Motor neuron (in vitro differentiated cells): ENCODE measurements at regions of chr10 and their contacts with region 1.

Region 1: GRCh38 chr10:115417585-115418265 is 324.6 kb downstream of the ATRNL1 start:
- ATAC-seq: peak in 3 of 8 experiments; percentile 91 to 100 (median 97)
- H3K4me3 ChIP-seq: no peak overlapping the region
- H3K27ac ChIP-seq: no peak overlapping the region
- H3K4me1 ChIP-seq: no peaks in the 10 kb centered on the region

Region 2: GRCh38 chr10:115129752-115130151 is 288.0 kb before region 1 on chr10:
- in situ Hi-C with region 1: loop called in 1 of 9 experiments (anchors 25 kb)
- ATAC-seq: peak in 3 of 8 experiments; percentile 28 to 41 (median 37)
- H3K4me3 ChIP-seq: no peak overlapping the region
- H3K27ac ChIP-seq: no peak overlapping the region
- H3K4me1 ChIP-seq: no peaks in the 10 kb centered on the region

Region 3: DNA sequence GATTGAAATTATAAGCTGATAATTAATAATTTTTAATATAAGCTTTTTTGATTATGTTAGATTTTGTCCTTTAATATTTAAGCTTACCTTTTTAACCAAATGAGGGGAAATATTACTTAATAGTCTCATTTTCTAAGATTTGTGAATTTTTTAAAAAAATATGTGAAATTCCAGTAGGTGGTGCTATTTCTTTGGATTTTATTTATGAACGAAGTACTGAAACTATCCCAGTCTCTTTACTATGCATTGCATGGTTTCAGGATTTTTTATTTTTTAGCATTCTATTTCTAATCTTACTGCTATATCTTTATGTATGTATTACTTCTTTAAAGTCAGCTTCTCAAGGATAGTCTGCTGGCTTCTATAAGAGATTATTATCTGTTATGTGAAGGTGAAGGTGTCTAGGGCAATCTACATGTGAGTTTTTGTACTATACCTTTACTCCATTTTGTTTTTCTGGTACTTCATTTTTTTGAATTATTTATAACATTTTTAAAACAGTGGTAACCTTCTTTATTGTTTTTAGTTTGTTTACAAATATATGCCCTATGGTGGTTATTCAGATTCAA is 246.2 kb before region 1 on chr10:
- in situ Hi-C with region 1: loop called in 2 of 9 experiments (anchors 25 kb)
- ATAC-seq: no peak
- H3K4me3 ChIP-seq: no peak overlapping the region
- H3K27ac ChIP-seq: no peak overlapping the region
- H3K4me1 ChIP-seq: no peaks in the 10 kb centered on the region